ENCODE measurements at regions of chr1 and their contacts with region 1.

Region 1: GRCh38 chr1:108691942-108692723 is at the start of gene PRPF38B:
- DNase-seq: peak; percentile 99
- total RNA-seq, gene PRPF38B: 27.3 to 29.8 TPM

Region 2: DNA sequence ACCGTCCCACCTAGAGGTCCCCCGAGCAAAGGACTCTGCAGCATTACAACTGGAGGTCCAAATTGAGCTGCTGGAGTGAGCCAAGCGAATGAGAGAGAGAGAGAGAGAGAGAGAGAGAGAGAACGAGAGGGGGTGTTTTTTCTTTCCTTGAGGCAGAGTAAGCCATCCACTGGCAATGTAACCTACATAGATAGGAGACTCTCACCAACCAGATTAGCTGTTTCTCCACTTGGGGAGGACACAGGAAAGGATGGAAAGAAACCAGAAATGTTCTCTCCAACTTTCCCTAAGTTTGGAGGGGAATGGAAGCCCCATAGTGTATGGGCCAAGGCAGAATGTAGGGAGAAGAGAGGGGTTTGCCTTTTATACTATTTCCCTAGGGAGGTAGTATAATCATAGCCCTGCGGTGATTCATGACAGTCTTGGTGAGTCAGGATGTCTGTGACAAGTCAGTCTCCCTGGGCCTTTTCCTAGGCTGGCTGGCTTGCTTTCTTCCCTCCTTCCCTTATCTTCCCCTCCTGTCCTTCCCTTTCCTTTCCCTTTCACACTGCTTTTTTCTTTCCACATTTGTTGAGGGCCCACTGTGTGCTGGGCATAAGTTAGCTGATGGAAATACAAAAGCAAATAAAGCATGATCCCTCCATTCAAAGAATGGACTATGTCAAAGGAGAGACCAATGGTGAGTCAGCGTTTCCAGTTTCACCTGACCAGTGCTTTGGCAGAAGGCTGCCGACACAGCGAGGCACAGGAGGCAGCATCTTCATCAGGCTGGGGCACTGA is 27.7 kb after region 1 on chr1:
- intact Hi-C with region 1: no loop called
- DNase-seq: no peak

Region 3: DNA sequence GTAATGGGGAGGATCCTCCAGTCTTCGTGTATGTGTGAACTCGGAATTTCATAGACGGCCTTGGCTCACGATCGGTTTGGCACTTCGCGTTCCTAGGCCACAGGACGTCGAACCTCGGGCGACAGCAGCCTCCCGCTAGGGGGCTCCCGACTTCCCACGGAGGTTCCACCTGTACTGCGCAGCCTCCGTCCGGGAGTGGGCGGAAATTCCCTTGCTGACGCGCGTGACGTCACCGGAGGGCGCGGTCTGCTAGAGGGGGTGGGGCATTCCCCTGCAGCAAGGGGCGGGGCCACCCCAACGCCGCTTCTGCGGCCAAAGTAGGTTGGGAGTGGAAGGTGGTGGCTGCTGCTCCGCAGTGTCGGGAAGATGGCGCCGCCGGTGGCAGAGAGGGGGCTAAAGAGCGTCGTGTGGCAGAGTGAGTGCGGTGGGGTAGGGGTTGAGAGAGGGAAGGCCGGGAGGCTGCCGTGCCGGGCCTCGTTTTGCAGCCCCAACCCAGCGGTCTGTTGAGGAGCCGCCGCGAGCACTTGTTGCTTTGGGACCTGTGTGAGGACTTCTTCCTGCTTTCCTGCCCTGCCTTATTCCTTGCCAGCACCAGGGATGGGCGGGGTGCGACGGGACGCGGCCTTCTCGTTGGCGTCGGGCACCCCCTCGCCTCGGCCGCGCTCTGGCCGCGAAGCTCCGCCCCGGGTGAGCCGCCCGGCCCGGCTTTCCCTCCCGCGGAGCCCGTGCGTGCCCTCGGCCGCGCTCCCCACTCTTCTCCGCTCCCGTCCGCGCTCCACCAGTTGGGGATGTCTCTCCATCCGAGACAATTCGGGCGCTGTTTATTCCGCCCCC is 54.5 kb after region 1 on chr1 and contains the start of gene STXBP3:
- intact Hi-C with region 1: loop called in 1 of 2 experiments (anchors 5 kb)
- DNase-seq: peak; percentile 100
- total RNA-seq, gene STXBP3: 53.2 to 57.5 TPM